ENCODE measurements at regions of chr17 and their contacts with region 1.

Region 1: GRCh38 chr17:49548506-49549310 is 27.0 kb upstream of the NXPH3 start:
- DNase-seq: peak; percentile 27
- ATAC-seq: peak; percentile 88
- H3K4me3 ChIP-seq: no peak overlapping the region
- H3K27ac ChIP-seq: no peak overlapping the region
- H3K4me1 ChIP-seq: no peaks in the 10 kb centered on the region
- H3K27me3 ChIP-seq: no peaks in the 10 kb centered on the region
- CTCF ChIP-seq: peak; percentile 86 to 96 (median 91)
- POLR2A ChIP-seq: no peak
- RAD21 ChIP-seq: peak; percentile 97

Region 2: DNA sequence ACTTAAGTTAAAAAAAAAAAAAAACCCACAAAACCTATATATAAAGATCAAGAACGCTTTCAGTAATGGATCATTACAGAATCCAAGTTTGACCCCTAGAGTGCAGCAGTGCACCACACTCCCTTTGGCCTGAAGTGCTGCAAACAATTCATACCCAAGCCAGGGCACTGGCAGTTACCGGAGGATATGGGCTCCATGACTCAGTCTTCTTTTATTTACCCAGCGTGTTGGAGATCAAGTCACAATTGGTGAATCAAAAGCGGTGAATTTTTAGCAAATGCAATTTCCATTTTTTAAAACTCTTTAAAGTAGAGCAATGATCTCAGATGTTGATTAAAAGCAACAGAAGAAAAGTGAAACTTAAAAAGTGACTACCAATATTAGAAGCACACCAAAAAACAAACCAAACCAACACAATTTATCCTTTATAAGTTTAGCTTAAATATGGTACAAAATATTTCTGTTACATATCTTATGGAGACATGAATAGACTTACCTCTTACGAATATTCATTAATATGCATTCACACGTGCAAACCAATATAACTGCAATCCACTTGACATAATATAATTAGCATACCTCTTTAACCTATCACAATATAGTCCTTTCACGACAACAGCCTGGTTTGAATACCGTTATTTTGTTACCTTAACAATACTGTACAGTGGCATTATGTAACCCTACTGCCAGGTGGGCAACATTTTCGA is 233.0 kb before region 1 on chr17:
- CTCF ChIA-PET with region 1: interaction called, 3 read pairs
- POLR2A ChIA-PET with region 1: no interaction called
- RAD21 ChIA-PET with region 1: no interaction called
- intact Hi-C with region 1: loop called (anchors 1 kb)
- DNase-seq: peak; percentile 79
- ATAC-seq: peak; percentile 99
- H3K4me3 ChIP-seq: no peak overlapping the region
- H3K27ac ChIP-seq: no peak overlapping the region
- H3K4me1 ChIP-seq: peaks cover 0 to 13% of the 10 kb centered on the region in 2 experiments; a peak in 2 of 4 replicates
- H3K27me3 ChIP-seq: no peaks in the 10 kb centered on the region
- CTCF ChIP-seq: peak; percentile 77 to 96 (median 95)
- POLR2A ChIP-seq: no peak
- RAD21 ChIP-seq: peak; percentile 98

Region 3: GRCh38 chr17:49407981-49408501 is 140.7 kb before region 1 on chr17:
- CTCF ChIA-PET with region 1: interaction called, 8 read pairs
- POLR2A ChIA-PET with region 1: interaction called, 3 read pairs
- RAD21 ChIA-PET with region 1: no interaction called
- intact Hi-C with region 1: loop called (anchors 1 kb)
- DNase-seq: peak; percentile 50
- ATAC-seq: peak; percentile 94
- H3K4me3 ChIP-seq: no peak overlapping the region
- H3K27ac ChIP-seq: no peak overlapping the region
- H3K4me1 ChIP-seq: peaks cover 0 to 3% of the 10 kb centered on the region in 2 experiments; a peak in 3 of 4 replicates
- H3K27me3 ChIP-seq: no peaks in the 10 kb centered on the region
- CTCF ChIP-seq: peak; percentile 99
- POLR2A ChIP-seq: no peak
- RAD21 ChIP-seq: peak; percentile 86

Region 4: GRCh38 chr17:49434821-49435670 is 113.7 kb before region 1 on chr17:
- CTCF ChIA-PET with region 1: interaction called, 5 read pairs
- POLR2A ChIA-PET with region 1: no interaction called
- RAD21 ChIA-PET with region 1: no interaction called
- intact Hi-C with region 1: loop called (anchors 1 kb)
- DNase-seq: peak; percentile 74
- ATAC-seq: peak; percentile 97
- H3K4me3 ChIP-seq: no peak overlapping the region
- H3K27ac ChIP-seq: no peak overlapping the region
- H3K4me1 ChIP-seq: no peaks in the 10 kb centered on the region
- H3K27me3 ChIP-seq: peaks cover 14% of the 10 kb centered on the region; the same call in 1 of the 2 replicates
- CTCF ChIP-seq: peak; percentile 82 to 88 (median 87)
- POLR2A ChIP-seq: no peak
- RAD21 ChIP-seq: peak; percentile 86

Region 5: GRCh38 chr17:49496183-49496866 is 52.4 kb before region 1 on chr17:
- CTCF ChIA-PET with region 1: interaction called, 3 read pairs
- POLR2A ChIA-PET with region 1: no interaction called
- RAD21 ChIA-PET with region 1: no interaction called
- intact Hi-C with region 1: loop called (anchors 2 kb)
- DNase-seq: no peak
- ATAC-seq: peak; percentile 75
- H3K4me3 ChIP-seq: peak overlapping the region; percentile 53 to 61
- H3K27ac ChIP-seq: no peak overlapping the region
- H3K4me1 ChIP-seq: peaks cover 5 to 25% of the 10 kb centered on the region in 2 experiments; a peak in 3 of 4 replicates
- H3K27me3 ChIP-seq: no peaks in the 10 kb centered on the region
- CTCF ChIP-seq: peak; percentile 40 to 86 (median 74)
- POLR2A ChIP-seq: no peak
- RAD21 ChIP-seq: no peak; the same call in 1 of the 2 replicates

Region 6: GRCh38 chr17:49515196-49515770 is 33.4 kb before region 1 on chr17:
- CTCF ChIA-PET with region 1: no interaction called
- POLR2A ChIA-PET with region 1: no interaction called
- RAD21 ChIA-PET with region 1: no interaction called
- intact Hi-C with region 1: no loop called
- DNase-seq: peak; percentile 36
- ATAC-seq: peak; percentile 96
- H3K4me3 ChIP-seq: no peak overlapping the region
- H3K27ac ChIP-seq: peak overlapping the region; percentile 42; the same call in 1 of the 2 replicates
- H3K4me1 ChIP-seq: peaks cover 18 to 22% of the 10 kb centered on the region in 2 experiments
- H3K27me3 ChIP-seq: no peaks in the 10 kb centered on the region
- CTCF ChIP-seq: 0 out of 6 replicates have a peak, but pooled peaks of 1 of the 3 experiments have one; percentile 7
- POLR2A ChIP-seq: peak; percentile 31
- RAD21 ChIP-seq: no peak

Measured in HCT116 (cell line).